ENCODE measurements at regions of chr10 and their contacts with region 1.

Region 1: DNA sequence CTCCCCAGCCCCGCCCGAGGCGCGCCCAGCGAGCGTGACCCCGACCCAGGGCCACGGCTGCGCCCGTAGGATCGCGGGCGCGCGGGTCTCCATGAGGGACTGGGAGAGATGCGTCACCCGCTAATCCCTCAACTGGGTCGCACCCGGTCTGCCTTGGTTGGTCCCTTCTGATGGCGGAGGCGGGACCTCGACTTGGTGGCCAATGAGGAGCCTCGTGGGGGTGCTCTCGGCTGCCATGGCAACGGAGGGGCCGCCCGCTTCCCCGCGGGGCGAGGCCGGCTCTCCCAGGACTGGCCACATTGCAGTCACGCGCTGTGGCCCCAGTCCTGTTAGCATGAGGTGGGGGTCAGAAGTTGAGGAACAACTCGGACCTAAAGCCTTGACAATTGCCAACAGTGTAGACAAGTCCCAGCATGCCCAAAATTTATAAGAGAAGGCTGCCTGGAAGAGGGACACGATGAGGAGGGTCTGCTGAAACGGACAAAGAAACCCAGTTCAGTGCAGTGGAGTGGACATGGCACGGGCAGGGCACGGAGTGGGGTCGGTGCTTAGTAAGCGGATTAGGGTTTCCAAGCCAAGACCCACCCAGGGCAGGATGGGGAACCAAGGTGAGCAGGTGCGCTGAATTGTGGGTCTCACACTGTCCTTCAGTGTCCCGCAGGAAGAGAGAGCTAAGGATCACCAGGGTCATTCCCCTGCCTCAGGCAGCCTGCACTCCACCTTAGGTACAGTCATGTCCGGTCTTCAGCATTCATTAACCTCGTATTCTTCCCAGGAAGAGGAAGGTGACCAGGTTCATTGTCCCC is 24.4 kb downstream of the DDIT4 start:
- DNase-seq: peak; percentile 98
- H3K4me3 Mint-ChIP-seq: peak overlapping the region; percentile 88
- H3K27ac Mint-ChIP-seq: peak overlapping the region; percentile 100
- H3K4me1 Mint-ChIP-seq: peaks cover 53% of the 10 kb centered on the region
- H3K27me3 Mint-ChIP-seq: peaks cover 2% of the 10 kb centered on the region

Region 2: DNA sequence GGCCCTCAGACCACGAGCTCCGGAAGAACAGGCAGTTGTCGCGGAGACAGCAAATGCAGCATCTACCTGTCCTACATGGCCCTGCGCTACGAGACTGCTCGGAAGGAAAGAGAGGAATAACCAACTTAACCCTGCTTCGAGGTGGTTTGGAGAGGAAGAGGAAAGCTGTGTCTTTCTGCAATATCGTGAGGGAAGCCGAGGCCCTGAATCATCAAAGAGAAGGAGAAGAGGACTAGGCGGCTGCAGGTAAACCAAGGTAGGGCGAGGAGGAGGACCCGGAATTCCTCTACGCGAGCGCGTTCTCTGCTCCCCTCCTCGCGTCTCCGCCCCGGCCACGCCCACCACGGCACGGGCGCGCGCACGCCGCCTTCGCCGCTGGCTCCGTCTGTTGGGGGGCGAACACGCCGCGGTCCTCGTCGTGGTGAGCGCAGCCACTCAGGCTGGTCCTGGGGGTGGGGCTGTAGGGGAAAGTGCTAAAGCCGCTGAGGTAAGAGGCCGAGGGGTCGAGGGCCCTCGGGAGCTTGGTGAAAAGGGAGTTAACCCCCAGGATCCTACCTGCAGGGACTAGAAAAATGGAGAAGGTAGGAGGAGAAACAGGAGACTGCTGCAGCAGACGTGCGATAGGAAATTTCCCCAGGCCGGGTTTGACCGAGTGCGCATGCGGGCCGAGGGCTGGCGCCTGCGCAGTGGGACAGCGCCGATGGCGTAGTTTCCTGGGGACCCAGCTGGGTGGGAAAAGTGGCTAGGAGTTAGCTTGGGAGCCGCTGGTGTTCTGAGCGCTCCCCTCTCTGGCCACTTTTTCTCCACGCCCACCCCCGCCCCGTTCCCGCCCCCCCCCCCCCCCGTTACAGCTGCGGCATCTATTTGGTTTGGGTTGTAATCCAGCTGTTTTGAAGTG is 82.3 kb before region 1 on chr10 and contains the starts of genes ANAPC16 and ASCC1:
- intact Hi-C with region 1: loop called (anchors 2 kb)
- DNase-seq: peak; percentile 99
- H3K4me3 Mint-ChIP-seq: peak within 1 kb of the TSS; percentile 96
- H3K27ac Mint-ChIP-seq: peak within 1 kb of the TSS; percentile 100
- H3K4me1 Mint-ChIP-seq: peaks cover 30% of the 10 kb centered on the region
- H3K27me3 Mint-ChIP-seq: peaks cover 1% of the 10 kb centered on the region
- total RNA-seq, gene ANAPC16: 73.2 and 74.3 TPM in 2 replicates
- total RNA-seq, gene ASCC1: 33.6 and 34.1 TPM in 2 replicates

Region 3: GRCh38 chr10:72260588-72261322 is 37.4 kb before region 1 on chr10:
- intact Hi-C with region 1: loop called (anchors 1 kb)
- DNase-seq: peak; percentile 96
- H3K4me3 Mint-ChIP-seq: peak overlapping the region; percentile 85
- H3K27ac Mint-ChIP-seq: peak overlapping the region; percentile 98
- H3K4me1 Mint-ChIP-seq: peaks cover 50% of the 10 kb centered on the region
- H3K27me3 Mint-ChIP-seq: no peaks in the 10 kb centered on the region

Region 4: DNA sequence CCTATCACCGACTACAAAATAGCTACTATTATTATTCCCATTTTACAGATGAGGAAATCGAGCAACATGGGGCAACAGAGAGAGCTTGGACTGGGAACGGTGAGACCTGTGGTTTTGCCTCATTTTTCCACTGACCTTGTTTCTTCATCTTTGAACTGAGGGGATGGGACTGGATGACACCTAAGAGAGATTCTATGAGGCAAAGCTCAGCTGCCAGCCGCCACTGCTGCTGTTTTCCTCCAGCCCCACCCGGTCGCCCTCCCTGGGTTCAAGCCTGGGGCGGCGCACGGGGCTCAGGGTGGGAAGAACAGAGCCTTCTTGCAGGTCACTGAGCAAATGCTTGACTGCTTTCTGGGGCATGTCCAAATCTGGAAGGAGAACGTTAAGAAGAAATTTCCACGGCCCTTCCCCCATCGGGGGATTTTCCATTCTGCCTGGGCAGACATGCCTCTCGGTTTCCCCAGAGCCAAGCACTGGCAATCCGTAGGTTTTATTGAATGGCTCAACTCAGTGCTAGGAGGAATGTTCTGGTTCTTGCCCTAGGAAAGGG is 12.1 kb before region 1 on chr10:
- intact Hi-C with region 1: loop called (anchors 1 kb)
- DNase-seq: no peak
- H3K4me3 Mint-ChIP-seq: no peak overlapping the region
- H3K27ac Mint-ChIP-seq: peak overlapping the region; percentile 65
- H3K4me1 Mint-ChIP-seq: peaks cover 34% of the 10 kb centered on the region
- H3K27me3 Mint-ChIP-seq: no peaks in the 10 kb centered on the region

Region 5: DNA sequence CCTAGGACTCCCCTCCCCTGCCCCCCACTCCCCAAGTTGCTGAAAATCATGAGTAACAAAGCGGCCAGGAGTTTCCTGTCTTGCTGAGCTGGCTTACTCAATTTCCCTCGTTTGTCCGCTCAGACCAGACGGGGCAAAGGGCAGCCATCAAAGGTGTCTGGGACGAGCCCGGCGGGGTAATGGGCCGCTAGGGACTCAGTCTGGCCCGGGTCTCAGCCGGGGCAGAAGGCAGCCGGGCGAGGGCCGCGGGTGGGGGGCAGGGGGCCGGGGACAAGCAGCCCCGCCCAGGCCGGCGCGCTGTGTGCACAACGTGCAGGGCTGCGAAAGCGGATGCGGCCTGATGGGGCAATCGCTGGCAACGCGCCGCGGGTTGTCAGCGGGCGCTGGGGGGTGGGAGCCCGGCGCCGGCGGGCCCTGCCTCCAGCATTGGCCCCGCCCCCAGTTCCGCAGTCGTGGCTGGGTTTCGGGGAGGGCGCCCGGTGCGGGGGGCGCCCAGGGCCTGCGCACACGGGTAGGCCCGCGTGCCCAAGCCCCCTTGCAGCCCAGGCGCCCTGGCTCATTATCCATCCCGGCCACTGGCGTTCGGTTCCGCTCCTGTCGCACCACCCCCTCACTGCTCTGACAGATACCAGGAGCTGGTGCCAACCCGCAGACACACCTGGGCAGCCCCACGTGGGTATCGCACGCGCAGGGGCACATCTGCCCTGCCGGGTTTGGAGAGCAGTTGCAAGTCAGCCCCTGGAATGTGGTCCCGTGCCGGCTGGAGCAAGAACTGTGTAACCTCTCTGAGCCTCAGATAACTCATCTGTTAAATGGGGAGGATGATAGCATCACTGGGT is 21.5 kb after region 1 on chr10:
- intact Hi-C with region 1: loop called (anchors 1 kb)
- DNase-seq: peak; percentile 96
- H3K4me3 Mint-ChIP-seq: peak overlapping the region; percentile 85
- H3K27ac Mint-ChIP-seq: peak overlapping the region; percentile 99
- H3K4me1 Mint-ChIP-seq: peaks cover 61% of the 10 kb centered on the region
- H3K27me3 Mint-ChIP-seq: no peaks in the 10 kb centered on the region

Region 6: GRCh38 chr10:72417971-72418370 is 119.8 kb after region 1 on chr10:
- intact Hi-C with region 1: no loop called
- DNase-seq: no peak
- H3K4me3 Mint-ChIP-seq: no peak overlapping the region
- H3K27ac Mint-ChIP-seq: no peak overlapping the region
- H3K4me1 Mint-ChIP-seq: no peaks in the 10 kb centered on the region
- H3K27me3 Mint-ChIP-seq: no peaks in the 10 kb centered on the region